ENCODE measurements at regions of chr13 and their contacts with region 1.

Region 1: DNA sequence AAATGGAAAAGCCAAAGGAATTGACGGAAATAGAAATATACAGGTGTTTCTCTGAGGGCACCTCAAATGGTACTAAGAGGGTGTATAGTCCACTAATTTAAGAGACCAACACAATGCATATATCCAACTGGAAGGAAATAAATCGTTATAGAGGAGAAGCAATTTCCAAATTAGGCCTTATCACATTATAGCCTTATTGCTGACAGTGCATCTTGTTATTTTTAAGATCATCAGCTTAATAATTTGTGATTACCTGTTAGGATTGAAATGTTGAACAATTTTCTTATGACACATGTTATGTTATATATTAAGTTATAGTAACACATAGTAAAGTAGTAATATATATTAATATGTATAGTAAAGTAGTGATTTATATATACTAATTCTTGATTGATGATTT is 915.7 kb upstream of the PCDH9 start:
- DNase-seq: no peak
- H3K4me3 ChIP-seq: no peak overlapping the region
- H3K27ac ChIP-seq: no peak overlapping the region
- H3K4me1 ChIP-seq: no peaks in the 10 kb centered on the region
- H3K27me3 ChIP-seq: no peaks in the 10 kb centered on the region
- CTCF ChIP-seq: no peak
- POLR2A ChIP-seq: no peak

Region 2: DNA sequence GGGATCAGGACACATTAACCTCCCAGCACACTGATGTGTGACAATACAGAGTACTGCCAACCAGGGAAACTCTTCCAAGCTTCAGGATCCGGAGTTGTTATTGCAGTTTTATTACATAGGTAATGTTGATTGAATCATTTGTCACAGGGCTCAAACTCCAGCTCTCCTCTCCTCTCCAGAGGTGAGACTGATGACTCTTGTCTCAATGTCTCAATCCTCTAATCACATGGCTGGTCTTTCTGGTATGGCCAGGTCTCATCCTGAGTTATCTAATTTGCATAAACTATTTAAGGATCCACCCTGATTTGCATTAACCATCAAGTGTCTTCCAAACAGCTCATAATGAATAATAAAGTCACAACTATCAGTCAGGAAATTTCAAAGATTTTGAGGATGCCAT is 393.1 kb before region 1 on chr13:
- intact Hi-C with region 1: loop called (anchors 10 kb)
- DNase-seq: no peak
- H3K4me3 ChIP-seq: no peak overlapping the region
- H3K27ac ChIP-seq: no peak overlapping the region
- H3K4me1 ChIP-seq: no peaks in the 10 kb centered on the region
- H3K27me3 ChIP-seq: no peaks in the 10 kb centered on the region
- CTCF ChIP-seq: no peak
- POLR2A ChIP-seq: no peak

Region 3: GRCh38 chr13:67996101-67996500 is 149.8 kb before region 1 on chr13:
- intact Hi-C with region 1: no loop called
- DNase-seq: no peak
- H3K4me3 ChIP-seq: no peak overlapping the region
- H3K27ac ChIP-seq: no peak overlapping the region
- H3K4me1 ChIP-seq: no peaks in the 10 kb centered on the region
- H3K27me3 ChIP-seq: no peaks in the 10 kb centered on the region
- CTCF ChIP-seq: no peak
- POLR2A ChIP-seq: no peak

Region 4: GRCh38 chr13:68047889-68048288 is 98.0 kb before region 1 on chr13:
- intact Hi-C with region 1: no loop called
- DNase-seq: no peak
- H3K4me3 ChIP-seq: no peak overlapping the region
- H3K27ac ChIP-seq: no peak overlapping the region
- H3K4me1 ChIP-seq: no peaks in the 10 kb centered on the region
- H3K27me3 ChIP-seq: no peaks in the 10 kb centered on the region
- CTCF ChIP-seq: no peak
- POLR2A ChIP-seq: no peak

Region 5: DNA sequence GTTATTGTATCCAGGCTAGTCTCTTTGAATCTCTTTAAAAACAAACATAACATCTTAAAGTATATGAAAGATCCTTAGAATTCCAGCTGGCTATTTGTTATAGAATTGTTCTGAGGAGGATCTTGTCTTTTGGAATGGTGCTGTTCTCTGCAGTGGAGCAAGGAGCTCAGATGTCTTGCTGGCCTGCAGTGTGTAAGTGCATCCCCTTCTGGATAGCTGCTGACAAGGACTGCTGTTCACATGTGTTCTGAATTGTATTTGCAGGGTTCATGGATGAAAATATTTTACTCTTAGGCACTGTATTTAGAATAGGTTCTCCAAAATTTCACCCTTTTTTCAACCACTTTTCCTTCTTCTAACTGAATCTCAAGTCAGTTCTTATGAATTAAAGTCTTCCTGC is 144.9 kb after region 1 on chr13:
- intact Hi-C with region 1: no loop called
- DNase-seq: no peak
- H3K4me3 ChIP-seq: no peak overlapping the region
- H3K27ac ChIP-seq: no peak overlapping the region
- H3K4me1 ChIP-seq: no peaks in the 10 kb centered on the region
- H3K27me3 ChIP-seq: no peaks in the 10 kb centered on the region
- CTCF ChIP-seq: no peak
- POLR2A ChIP-seq: no peak

Measured in vagina (tissue), 2 donors.